ENCODE measurements at regions of chr10 and their contacts with region 1.

Region 1: DNA sequence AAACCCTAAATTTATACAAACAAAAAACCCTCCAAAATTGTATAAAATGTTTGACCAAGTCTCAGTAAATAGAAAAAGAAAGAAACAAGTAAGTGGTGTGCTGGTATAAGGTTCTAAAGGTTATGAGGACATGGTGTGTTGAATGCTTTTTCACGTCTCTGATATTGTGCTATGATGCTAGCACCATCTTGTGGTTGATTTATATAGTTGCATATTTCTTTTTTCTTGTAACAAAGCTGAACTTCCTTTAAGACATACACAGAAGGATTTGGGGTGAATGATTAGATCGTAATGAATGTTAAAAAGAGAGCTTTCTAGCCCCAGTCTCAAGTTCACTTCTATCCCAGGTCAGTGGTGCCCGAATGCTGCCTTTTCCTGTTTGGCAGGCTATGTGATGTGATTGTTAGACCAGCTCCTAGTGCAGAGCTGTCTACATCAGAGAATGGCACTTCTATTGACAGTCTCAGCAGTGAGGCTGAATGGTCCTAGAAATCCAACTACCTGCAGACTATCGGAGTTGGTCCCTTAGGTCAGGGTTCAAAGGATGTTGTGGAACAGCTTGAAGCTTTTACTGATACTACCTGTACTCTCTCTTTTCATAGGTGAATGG is 25.0 kb downstream of the VTI1A start:
- DNase-seq: peak; percentile 54
- ATAC-seq: peak; percentile 47
- H3K4me3 ChIP-seq: no peak overlapping the region
- H3K4me3 Mint-ChIP-seq: no peak overlapping the region
- H3K27ac ChIP-seq: no peak overlapping the region
- H3K27ac Mint-ChIP-seq: peak overlapping the region; percentile 17
- H3K4me1 ChIP-seq: peaks cover 0 to 3% of the 10 kb centered on the region in 2 donors
- H3K4me1 Mint-ChIP-seq: peaks cover 4% of the 10 kb centered on the region
- H3K27me3 ChIP-seq: no peaks in the 10 kb centered on the region
- H3K27me3 Mint-ChIP-seq: no peaks in the 10 kb centered on the region
- CTCF ChIP-seq: peak; percentile 83

Region 2: DNA sequence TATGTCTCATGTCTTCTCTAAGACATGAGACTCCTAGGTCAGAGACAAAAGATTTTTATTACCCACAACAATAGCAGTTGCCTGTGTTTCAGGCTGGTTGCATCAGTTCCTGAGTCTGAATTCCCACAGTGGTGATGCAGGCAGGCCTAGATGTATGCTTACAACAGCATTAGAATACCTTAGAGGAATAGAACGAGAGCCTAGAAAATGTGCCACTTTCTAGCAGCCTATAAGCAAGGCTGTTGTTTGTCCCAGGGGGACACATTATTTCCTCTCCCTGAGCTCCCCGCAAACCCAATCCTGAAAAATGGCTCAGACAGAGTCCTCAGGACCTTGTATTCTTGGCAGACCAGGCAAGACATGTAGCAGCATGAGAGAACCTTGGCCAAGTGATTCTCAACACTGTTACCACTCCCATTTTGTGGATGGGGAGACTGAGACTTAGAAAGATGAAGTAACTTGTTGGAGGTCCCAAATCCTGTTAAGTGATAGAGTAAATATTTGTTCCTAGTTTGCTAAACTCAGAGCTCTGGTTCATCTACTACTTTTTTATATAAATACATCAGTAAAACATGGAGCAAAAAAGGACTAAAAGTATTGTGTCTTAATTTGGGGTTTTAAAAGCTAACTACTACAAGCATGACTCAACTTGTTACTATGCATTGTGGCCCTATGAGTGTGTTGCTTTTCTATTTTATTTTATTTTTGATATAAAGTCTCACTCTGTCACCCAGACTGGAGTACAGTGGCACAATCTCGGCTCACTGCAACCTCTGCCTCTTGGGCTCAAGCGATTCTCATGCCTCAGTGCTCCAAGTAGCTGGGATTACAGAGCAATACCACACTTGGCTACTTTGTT is 10.7 kb before region 1 on chr10:
- CTCF ChIA-PET with region 1: interaction called, 10 read pairs
- POLR2A ChIA-PET with region 1: no interaction called
- intact Hi-C with region 1: no loop called
- DNase-seq: no peak
- ATAC-seq: no peak
- H3K4me3 ChIP-seq: no peak overlapping the region
- H3K4me3 Mint-ChIP-seq: no peak overlapping the region
- H3K27ac ChIP-seq: no peak overlapping the region
- H3K27ac Mint-ChIP-seq: no peak overlapping the region
- H3K4me1 ChIP-seq: no peaks in the 10 kb centered on the region
- H3K4me1 Mint-ChIP-seq: peaks cover 12% of the 10 kb centered on the region
- H3K27me3 ChIP-seq: no peaks in the 10 kb centered on the region
- H3K27me3 Mint-ChIP-seq: no peaks in the 10 kb centered on the region
- CTCF ChIP-seq: no peak

Region 3: DNA sequence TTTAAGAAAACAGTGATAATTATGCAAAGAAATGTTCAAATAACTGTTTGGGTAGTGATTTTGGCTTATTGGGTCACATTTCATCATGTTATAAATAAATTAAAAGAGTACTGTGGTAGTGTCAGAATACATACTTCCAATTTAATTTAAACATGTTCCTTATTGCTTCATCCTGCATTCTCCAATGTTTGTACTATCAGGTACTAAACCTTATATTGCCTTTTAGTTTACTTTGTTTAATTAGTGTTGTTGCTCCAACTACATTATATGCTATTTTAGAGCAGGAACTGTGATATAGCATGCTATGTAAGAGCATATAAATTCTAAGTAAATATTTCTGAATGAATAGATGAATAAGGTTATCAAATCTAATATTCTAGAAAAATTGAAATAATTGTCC is 16.0 kb after region 1 on chr10:
- CTCF ChIA-PET with region 1: interaction called, 11 read pairs
- POLR2A ChIA-PET with region 1: no interaction called
- intact Hi-C with region 1: no loop called
- DNase-seq: no peak
- ATAC-seq: no peak
- H3K4me3 ChIP-seq: no peak overlapping the region
- H3K4me3 Mint-ChIP-seq: no peak overlapping the region
- H3K27ac ChIP-seq: no peak overlapping the region
- H3K27ac Mint-ChIP-seq: no peak overlapping the region
- H3K4me1 ChIP-seq: no peaks in the 10 kb centered on the region
- H3K4me1 Mint-ChIP-seq: no peaks in the 10 kb centered on the region
- H3K27me3 ChIP-seq: no peaks in the 10 kb centered on the region
- H3K27me3 Mint-ChIP-seq: no peaks in the 10 kb centered on the region
- CTCF ChIP-seq: no peak

Region 4: GRCh38 chr10:112741830-112742411 is 269.9 kb after region 1 on chr10:
- CTCF ChIA-PET with region 1: no interaction called
- POLR2A ChIA-PET with region 1: no interaction called
- intact Hi-C with region 1: no loop called
- DNase-seq: peak; percentile 2
- ATAC-seq: no peak
- H3K4me3 ChIP-seq: no peak overlapping the region
- H3K4me3 Mint-ChIP-seq: no peak overlapping the region
- H3K27ac ChIP-seq: no peak overlapping the region
- H3K27ac Mint-ChIP-seq: no peak overlapping the region
- H3K4me1 ChIP-seq: no peaks in the 10 kb centered on the region
- H3K4me1 Mint-ChIP-seq: no peaks in the 10 kb centered on the region
- H3K27me3 ChIP-seq: no peaks in the 10 kb centered on the region
- H3K27me3 Mint-ChIP-seq: no peaks in the 10 kb centered on the region
- CTCF ChIP-seq: no peak

Measured in B cell (primary cell).